ENCODE measurements at regions of chr14 and their contacts with region 1.

Region 1: GRCh38 chr14:55160989-55161388 is 30.4 kb downstream of the DLGAP5 start:
- DNase-seq: no peak
- H3K4me3 Mint-ChIP-seq: no peak overlapping the region
- H3K27ac Mint-ChIP-seq: no peak overlapping the region
- H3K4me1 Mint-ChIP-seq: peaks cover 5% of the 10 kb centered on the region
- H3K27me3 Mint-ChIP-seq: no peaks in the 10 kb centered on the region
- CTCF ChIP-seq: no peak

Region 2: GRCh38 chr14:55026793-55027561 is 134.0 kb before region 1 on chr14 and contains the starts of genes SOCS4 and WDHD1:
- CTCF ChIA-PET with region 1: interaction called, 10 read pairs
- intact Hi-C with region 1: no loop called
- DNase-seq: peak; percentile 97
- H3K4me3 Mint-ChIP-seq: peak within 1 kb of the TSS; percentile 89
- H3K27ac Mint-ChIP-seq: peak within 1 kb of the TSS; percentile 23
- H3K4me1 Mint-ChIP-seq: peaks cover 32% of the 10 kb centered on the region
- H3K27me3 Mint-ChIP-seq: no peaks in the 10 kb centered on the region
- CTCF ChIP-seq: no peak
- total RNA-seq, gene SOCS4: 29.9 and 31.5 TPM in 2 replicates
- total RNA-seq, gene WDHD1: 25.0 and 27.7 TPM in 2 replicates

Region 3: GRCh38 chr14:55051426-55052268 is 109.3 kb before region 1 on chr14 and contains the start of gene MAPK1IP1L:
- CTCF ChIA-PET with region 1: interaction called, 19 read pairs
- intact Hi-C with region 1: no loop called
- DNase-seq: peak; percentile 94
- H3K4me3 Mint-ChIP-seq: peak within 1 kb of the TSS; percentile 92
- H3K27ac Mint-ChIP-seq: peak within 1 kb of the TSS; percentile 99
- H3K4me1 Mint-ChIP-seq: peaks cover 10% of the 10 kb centered on the region
- H3K27me3 Mint-ChIP-seq: no peaks in the 10 kb centered on the region
- CTCF ChIP-seq: peak; percentile 97
- total RNA-seq, gene MAPK1IP1L: 104 and 108 TPM in 2 replicates

Region 4: GRCh38 chr14:55077155-55077554 is 83.8 kb before region 1 on chr14:
- CTCF ChIA-PET with region 1: interaction called, 11 read pairs
- intact Hi-C with region 1: no loop called
- DNase-seq: peak; percentile 73
- H3K4me3 Mint-ChIP-seq: peak overlapping the region; percentile 53
- H3K27ac Mint-ChIP-seq: peak overlapping the region; percentile 96
- H3K4me1 Mint-ChIP-seq: peaks cover 30% of the 10 kb centered on the region
- H3K27me3 Mint-ChIP-seq: no peaks in the 10 kb centered on the region
- CTCF ChIP-seq: no peak

Region 5: DNA sequence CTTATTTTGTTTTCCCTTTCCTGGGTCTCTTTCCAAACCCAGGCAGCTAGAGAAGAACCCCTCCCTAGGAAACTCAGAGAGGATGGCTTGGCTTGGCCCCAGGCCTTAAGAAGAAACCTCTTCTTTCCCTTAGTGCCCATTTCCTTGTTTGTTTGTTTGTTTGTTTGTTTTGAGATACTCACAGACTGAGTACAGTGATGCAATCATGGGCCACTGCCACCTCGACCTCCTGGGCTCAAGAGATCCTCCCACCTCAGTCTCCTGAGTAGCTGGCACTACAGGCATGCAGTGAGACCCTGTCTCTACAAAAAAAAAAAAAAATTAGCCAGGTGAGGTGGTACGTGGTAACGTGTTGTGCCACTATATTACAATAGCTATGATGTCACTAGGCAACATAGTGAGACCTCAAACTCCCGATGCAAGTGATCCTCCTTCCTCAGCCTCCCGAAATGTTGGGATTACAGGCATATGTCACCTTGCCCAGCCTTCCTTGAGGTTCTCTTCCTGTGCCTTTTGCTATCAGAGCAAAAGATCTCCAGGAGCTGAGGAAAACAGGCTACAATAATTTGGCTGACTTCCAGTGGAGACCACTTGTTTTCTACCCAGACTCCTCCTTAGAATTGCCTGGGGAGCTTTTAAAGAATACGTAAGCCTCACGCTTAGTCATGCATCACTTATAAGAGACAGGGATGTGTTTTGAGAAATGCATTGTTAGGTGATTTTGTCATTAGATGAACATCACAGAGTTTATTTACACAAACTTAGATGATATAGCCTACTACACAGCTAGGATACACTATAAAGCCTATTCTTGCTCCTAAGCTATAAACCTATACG is 66.5 kb before region 1 on chr14:
- CTCF ChIA-PET with region 1: interaction called, 10 read pairs
- intact Hi-C with region 1: loop called (anchors 1 kb)
- DNase-seq: no peak
- H3K4me3 Mint-ChIP-seq: no peak overlapping the region
- H3K27ac Mint-ChIP-seq: no peak overlapping the region
- H3K4me1 Mint-ChIP-seq: peaks cover 43% of the 10 kb centered on the region
- H3K27me3 Mint-ChIP-seq: no peaks in the 10 kb centered on the region
- CTCF ChIP-seq: no peak